Colonic mucosa (tissue), 4 donors: ENCODE measurements at regions of chr11 and their contacts with region 1.

Region 1: DNA sequence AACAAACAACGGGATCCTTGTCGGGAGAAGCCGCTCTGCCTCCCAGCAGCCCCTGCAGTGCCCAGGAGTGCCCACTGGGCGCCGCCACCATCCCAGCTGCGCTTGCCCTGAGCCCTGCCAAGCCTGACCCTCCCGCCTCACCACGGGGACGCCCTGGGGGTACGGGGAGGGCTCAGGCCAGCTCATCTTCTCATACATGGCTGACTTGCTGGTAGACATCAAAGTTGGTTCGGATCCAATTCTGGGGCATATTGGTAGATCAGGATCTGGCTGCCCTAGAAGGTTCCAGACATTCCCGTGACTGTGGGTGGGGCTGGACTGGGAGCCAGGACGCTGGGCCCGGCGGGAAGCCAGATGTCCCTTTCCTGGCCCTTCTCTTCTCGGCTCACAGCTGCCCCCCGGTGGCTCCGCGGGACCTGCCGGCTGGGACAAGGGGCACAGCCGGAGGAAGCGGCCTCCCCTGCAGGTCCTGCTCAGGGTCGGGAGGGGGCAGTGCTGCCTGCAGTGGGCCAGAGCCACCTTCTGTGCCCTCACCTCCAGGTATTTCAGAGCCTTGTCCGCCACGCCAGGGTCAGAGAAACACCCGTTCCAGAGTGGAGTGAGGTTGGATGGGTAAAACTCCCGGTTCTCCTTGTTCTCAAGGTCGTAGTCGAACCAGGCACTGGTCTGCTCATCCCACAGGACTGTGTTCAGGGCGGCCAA is 10.6 kb upstream of the TREH start:
- DNase-seq: peak; percentile 99
- H3K4me3 ChIP-seq: peak overlapping the region; percentile 29
- H3K27ac ChIP-seq: peak overlapping the region; percentile 60
- H3K4me1 ChIP-seq: peaks cover 4% of the 10 kb centered on the region
- H3K27me3 ChIP-seq: no peaks in the 10 kb centered on the region
- CTCF ChIP-seq: peak; percentile 95

Region 2: DNA sequence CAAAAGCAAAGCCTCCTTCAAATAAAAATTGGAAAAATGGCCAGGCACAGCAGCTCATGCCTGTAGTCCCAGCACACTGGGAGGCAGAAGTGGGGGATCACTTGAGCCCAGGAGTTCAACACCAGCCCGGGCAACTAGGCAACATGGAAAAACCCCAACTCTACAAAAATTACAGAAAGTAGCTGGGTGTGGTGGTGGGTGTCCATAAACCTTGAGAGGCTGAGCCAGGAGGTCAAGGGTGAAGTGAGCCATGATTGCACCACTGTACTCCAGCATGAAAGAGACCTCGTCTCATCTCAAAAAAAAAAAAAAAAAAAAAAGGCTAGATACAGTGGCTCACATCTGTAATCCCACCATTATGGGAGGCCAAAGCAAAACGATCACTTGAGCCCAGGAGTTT is 78.7 kb after region 1 on chr11:
- intact Hi-C with region 1: loop called (anchors 10 kb)
- DNase-seq: no peak
- H3K4me3 ChIP-seq: no peak overlapping the region
- H3K27ac ChIP-seq: no peak overlapping the region
- H3K4me1 ChIP-seq: peaks cover 3% of the 10 kb centered on the region
- H3K27me3 ChIP-seq: no peaks in the 10 kb centered on the region
- CTCF ChIP-seq: no peak

Region 3: DNA sequence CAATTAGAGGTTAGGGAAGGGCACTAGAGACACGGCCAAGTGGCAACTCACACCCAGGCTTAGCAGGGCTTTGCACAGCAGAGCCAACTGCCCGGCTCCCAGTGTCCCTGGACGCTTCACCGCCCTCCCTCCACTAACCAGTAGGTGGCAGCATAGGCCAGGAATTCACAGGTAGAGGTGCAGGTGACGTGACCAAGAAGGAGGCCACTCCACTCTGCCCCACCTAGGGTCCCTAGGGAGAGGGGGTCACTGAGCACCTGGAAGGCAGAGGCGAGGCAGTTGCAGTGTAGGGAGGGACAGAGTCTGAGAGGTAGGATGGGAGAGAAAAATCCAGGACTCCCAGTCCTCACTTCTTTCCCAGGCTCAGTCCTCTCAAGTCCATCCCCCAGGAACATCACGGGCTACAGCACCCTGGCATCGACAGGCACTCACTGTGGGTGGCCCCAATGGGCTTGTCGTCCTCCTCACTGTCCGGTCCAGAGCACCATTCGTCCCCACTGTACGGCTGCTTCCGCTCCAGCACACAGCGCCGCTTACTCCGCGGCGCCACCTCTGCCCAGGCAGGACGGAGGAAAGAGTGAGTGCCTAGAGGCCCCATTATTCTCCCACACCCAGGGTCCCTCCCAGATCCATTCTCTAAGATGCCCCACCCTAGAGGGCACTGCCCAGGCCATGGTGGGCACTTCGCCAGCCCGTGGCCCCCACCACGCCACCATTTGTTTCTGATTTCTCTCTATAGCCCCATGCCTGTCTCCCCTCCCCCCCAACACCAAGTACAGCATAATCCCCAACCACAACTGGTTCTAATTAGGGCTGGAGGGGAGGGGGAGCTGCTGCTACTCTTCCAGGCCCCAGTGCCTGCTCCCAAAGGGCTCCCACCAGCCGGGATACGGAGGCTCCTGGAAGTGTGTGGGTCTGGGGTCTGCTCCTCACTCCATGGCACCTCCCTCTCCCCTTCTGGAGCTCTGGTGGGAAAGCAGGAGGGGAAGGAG is 217.3 kb after region 1 on chr11:
- intact Hi-C with region 1: loop called (anchors 10 kb)
- DNase-seq: peak; percentile 94
- H3K4me3 ChIP-seq: no peak overlapping the region
- H3K27ac ChIP-seq: no peak overlapping the region
- H3K4me1 ChIP-seq: peaks cover 22% of the 10 kb centered on the region
- H3K27me3 ChIP-seq: no peaks in the 10 kb centered on the region
- CTCF ChIP-seq: peak; percentile 91

Region 4: GRCh38 chr11:118956094-118956846 is 266.3 kb after region 1 on chr11 and contains the start of gene UPK2:
- intact Hi-C with region 1: loop called (anchors 5 kb)
- DNase-seq: peak; percentile 90
- H3K4me3 ChIP-seq: no peak within 1 kb of the TSS
- H3K27ac ChIP-seq: no peak within 1 kb of the TSS
- H3K4me1 ChIP-seq: no peaks in the 10 kb centered on the region
- H3K27me3 ChIP-seq: no peaks in the 10 kb centered on the region
- CTCF ChIP-seq: peak; percentile 91
- total RNA-seq, gene UPK2: not detected